Activated CD4-positive, alpha-beta T cell treated with anti-CD3 and anti-CD28 coated beads, Interleukin-2, amount 10 ng/mL, durations not matched to agents 24 days and 14 days (primary cell): ENCODE measurements at regions of chr17 and their contacts with region 1.

Region 1: DNA sequence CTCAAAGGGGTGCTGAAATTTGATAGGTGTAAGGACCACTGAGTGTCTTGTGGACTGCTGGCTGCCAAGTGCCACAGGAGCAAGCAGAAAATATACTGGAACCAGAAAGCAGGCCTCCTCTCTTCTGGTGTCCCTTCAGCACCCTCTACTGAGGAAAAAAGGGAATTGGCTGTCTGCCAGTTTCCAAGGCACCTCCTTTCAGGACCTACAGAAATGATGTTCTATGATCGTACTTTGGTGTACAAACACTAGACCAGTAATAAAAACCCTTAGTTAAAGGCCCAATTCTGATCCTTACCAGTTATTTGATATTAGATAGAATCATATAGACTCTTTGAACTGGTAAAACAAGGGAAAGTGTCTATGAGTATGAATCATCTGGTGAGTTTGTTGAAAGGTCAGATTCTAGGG is 35.8 kb upstream of the BCAS3 start:
- DNase-seq: peak; percentile 87
- H3K4me3 Mint-ChIP-seq: no peak overlapping the region
- H3K27ac Mint-ChIP-seq: no peak overlapping the region
- H3K4me1 Mint-ChIP-seq: peaks cover 11% of the 10 kb centered on the region
- H3K27me3 Mint-ChIP-seq: no peaks in the 10 kb centered on the region

Region 2: DNA sequence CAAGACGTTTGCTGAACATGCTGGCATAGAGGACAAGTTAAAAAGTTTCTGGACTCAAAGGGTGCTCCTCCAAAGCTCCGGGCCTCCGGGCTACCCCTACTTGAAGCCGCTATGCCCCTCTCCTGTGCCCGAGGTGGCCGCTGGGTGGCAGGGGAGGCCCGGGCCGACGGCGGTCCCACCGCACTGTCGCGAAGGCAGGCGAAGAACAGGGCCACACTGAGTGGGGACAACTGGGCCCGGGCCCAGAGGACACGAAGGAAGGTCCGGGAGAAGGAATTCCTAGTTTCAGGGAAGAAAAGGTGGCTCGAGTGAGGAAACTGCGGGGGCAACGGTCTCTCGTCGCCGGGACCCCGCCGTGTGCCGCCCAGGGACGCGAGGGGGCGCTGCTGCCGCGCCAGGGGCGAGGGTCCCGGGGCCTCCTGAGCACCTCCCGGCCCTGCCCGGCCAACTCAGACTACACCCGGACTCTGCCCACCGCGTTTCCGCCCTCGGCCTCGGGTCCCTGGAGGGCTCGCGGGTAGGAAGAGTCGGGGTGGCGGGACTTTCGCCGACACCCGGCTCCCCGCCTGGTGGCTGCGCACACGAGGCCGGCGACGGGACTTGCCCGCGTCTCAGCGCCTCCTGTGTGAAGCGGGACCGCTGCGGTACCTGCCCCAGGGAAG is 220.4 kb before region 1 on chr17:
- intact Hi-C with region 1: loop called (anchors 2 kb)
- DNase-seq: peak; percentile 91
- H3K4me3 Mint-ChIP-seq: peak overlapping the region; percentile 84
- H3K27ac Mint-ChIP-seq: peak overlapping the region; percentile 82
- H3K4me1 Mint-ChIP-seq: peaks cover 6% of the 10 kb centered on the region
- H3K27me3 Mint-ChIP-seq: peaks cover 8% of the 10 kb centered on the region

Region 3: GRCh38 chr17:60599620-60600489 is 42.0 kb before region 1 on chr17 and contains the start of gene PPM1D:
- intact Hi-C with region 1: loop called (anchors 2 kb)
- DNase-seq: peak; percentile 99
- H3K4me3 Mint-ChIP-seq: peak within 1 kb of the TSS; percentile 95
- H3K27ac Mint-ChIP-seq: peak within 1 kb of the TSS; percentile 98
- H3K4me1 Mint-ChIP-seq: peaks cover 37% of the 10 kb centered on the region
- H3K27me3 Mint-ChIP-seq: no peaks in the 10 kb centered on the region
- total RNA-seq, gene PPM1D: 17.1 and 17.9 TPM in 2 replicates

Region 4: GRCh38 chr17:60677308-60678124 is 35.7 kb after region 1 on chr17 and contains the start of gene BCAS3:
- intact Hi-C with region 1: no loop called
- DNase-seq: peak; percentile 99
- H3K4me3 Mint-ChIP-seq: peak within 1 kb of the TSS; percentile 100
- H3K27ac Mint-ChIP-seq: peak within 1 kb of the TSS; percentile 74
- H3K4me1 Mint-ChIP-seq: peaks cover 19% of the 10 kb centered on the region
- H3K27me3 Mint-ChIP-seq: no peaks in the 10 kb centered on the region
- total RNA-seq, gene BCAS3: 9.5 and 10.2 TPM in 2 replicates